GM12878 (cell line): ENCODE measurements at regions of chr2 and their contacts with region 1.

Region 1: DNA sequence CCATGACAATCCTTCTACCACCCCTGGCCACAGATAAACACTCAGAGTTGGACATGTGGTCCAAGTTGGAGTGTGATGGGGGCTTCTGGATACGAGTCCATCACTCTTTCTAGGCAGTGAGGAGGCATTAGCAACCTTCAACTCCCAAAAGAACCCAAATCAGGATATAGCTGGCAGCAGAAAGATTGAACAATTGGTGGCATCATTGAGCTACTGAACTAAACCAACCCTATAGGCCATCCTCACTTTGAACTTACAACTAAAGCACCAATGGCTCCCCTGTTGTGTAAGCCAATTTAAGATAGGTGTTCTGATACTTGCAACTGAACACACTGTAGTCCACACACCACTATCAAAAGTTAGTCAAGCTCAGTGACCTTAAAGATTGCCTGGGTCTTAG is 24.0 kb upstream of the MARCO start:
- DNase-seq: no peak
- ATAC-seq: no peak
- H3K4me3 ChIP-seq: no peak overlapping the region
- H3K27ac ChIP-seq: no peak overlapping the region
- H3K4me1 ChIP-seq: no peaks in the 10 kb centered on the region
- H3K27me3 ChIP-seq: no peaks in the 10 kb centered on the region; a peak in 1 of 4 replicates
- CTCF ChIP-seq: no peak
- EP300 ChIP-seq: no peak
- POLR2A ChIP-seq: no peak
- RAD21 ChIP-seq: 0 out of 2 replicates have a peak, but pooled peaks have one; percentile 6

Region 2: GRCh38 chr2:118889995-118890394 is 28.0 kb before region 1 on chr2:
- CTCF ChIA-PET with region 1: no interaction called
- POLR2A ChIA-PET with region 1: no interaction called
- RAD21 ChIA-PET with region 1: no interaction called
- SMC1A ChIA-PET with region 1: no interaction called
- in situ Hi-C with region 1: no loop called
- intact Hi-C with region 1: no loop called
- DNase-seq: no peak
- ATAC-seq: no peak
- H3K4me3 ChIP-seq: no peak overlapping the region
- H3K27ac ChIP-seq: no peak overlapping the region
- H3K4me1 ChIP-seq: no peaks in the 10 kb centered on the region
- H3K27me3 ChIP-seq: no peaks in the 10 kb centered on the region
- CTCF ChIP-seq: no peak
- EP300 ChIP-seq: no peak
- POLR2A ChIP-seq: no peak
- RAD21 ChIP-seq: no peak

Region 3: GRCh38 chr2:119011162-119011909 is 93.3 kb after region 1 on chr2:
- CTCF ChIA-PET with region 1: interaction called, 4 read pairs
- POLR2A ChIA-PET with region 1: no interaction called
- RAD21 ChIA-PET with region 1: no interaction called
- SMC1A ChIA-PET with region 1: interaction called, 12 read pairs
- in situ Hi-C with region 1: no loop called
- intact Hi-C with region 1: no loop called
- DNase-seq: no peak
- ATAC-seq: peak; percentile 75
- H3K4me3 ChIP-seq: no peak overlapping the region
- H3K27ac ChIP-seq: no peak overlapping the region
- H3K4me1 ChIP-seq: no peaks in the 10 kb centered on the region
- H3K27me3 ChIP-seq: peaks cover 8 to 11% of the 10 kb centered on the region in 2 experiments
- CTCF ChIP-seq: peak; percentile 34 to 47 (median 45); a peak in 4 of 6 replicates
- EP300 ChIP-seq: no peak
- POLR2A ChIP-seq: no peak
- RAD21 ChIP-seq: peak; percentile 51